Posterior vena cava (tissue), 2 donors: ENCODE measurements at regions of chr2 and their contacts with region 1.

Region 1: GRCh38 chr2:28392297-28393113 is at the start of gene FOSL2:
- DNase-seq: peak; percentile 98
- total RNA-seq, gene FOSL2: 105 to 141 TPM

Region 2: DNA sequence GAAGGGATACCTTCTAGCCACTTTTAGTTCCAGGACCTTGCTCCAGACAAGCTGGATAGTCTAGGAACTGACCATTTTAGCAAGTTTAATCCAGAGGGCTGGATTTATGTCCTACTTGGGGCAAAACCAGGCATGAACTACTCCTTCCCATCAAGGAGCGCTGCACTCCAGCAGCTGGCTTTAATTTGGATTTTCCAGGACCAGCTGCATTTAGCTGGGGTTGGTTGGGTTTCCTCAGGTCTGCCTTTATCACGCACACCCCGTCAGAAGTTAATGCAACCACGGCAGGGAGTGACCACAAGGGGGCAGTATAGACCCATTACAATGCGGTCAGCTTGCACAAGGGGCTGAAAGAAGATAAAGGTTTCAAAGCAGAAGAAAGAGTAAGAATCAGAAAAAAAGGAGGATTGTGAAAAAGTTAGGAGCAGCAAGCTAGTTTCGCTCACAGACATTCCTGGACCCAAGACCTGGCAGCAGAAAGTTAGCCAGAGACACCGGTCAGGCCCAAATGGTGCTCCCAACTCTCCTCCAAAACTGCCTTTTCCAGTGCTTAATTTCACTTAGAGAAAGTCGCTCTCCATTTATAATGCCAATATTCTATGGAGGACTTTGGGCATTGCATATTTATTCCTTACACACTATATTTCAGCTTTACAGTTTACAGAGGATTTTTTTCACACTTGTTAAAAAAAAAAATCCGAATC is 688.7 kb before region 1 on chr2:
- intact Hi-C with region 1: loop called in 1 of 2 experiments (anchors 5 kb)
- DNase-seq: peak; percentile 91

Region 3: DNA sequence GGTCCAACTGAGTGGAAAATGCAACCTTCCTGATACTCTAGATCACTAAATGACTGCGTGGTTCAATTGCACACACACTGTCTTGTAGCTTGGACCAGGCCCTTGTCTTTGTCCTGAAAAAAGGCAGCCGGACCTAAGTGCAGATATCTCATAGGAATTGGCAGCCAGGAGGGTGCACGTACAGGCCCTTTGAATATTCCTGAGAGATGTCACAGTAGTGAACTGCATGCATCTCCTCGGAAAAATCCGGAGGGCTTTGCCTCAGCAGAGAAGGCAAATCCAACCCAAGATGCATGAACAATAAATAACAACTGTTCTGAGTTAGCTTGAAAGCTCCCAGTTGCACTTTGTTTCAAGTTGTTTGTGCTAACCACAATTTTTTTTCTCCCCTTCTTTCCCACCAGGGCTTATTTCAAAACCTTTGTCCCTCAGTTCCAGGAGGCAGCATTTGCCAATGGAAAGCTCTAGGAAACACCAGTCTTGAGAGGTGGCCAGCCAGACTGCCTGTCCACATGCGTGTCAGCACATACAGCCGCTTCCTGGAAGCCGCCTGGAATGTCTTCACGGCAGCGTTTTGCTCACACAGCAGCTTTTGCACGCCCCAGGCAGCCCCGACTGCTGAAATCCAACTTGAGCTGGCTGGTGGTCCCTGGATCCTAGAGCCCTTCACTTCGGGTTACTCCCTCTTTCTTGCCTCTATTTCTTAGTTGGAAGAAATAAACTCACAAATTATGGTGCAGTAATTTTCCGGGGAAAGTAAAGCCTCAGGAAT is 54.3 kb before region 1 on chr2:
- intact Hi-C with region 1: loop called in 1 of 2 experiments (anchors 5 kb)
- DNase-seq: peak; percentile 94